Activated CD8-positive, alpha-beta memory T cell treated with anti-CD3 and anti-CD28 coated beads, Interleukin-2, amount 10 ng/mL, durations not matched to agents 7 days and 5 days (primary cell): ENCODE measurements at regions of chr20 and their contacts with region 1.

Region 1: GRCh38 chr20:50179507-50180016 is 11.1 kb upstream of the CEBPB start:
- DNase-seq: no peak
- ATAC-seq: no peak
- H3K4me3 Mint-ChIP-seq: no peak overlapping the region
- H3K27ac Mint-ChIP-seq: no peak overlapping the region
- H3K4me1 Mint-ChIP-seq: no peaks in the 10 kb centered on the region
- H3K27me3 Mint-ChIP-seq: peaks cover 12% of the 10 kb centered on the region

Region 2: DNA sequence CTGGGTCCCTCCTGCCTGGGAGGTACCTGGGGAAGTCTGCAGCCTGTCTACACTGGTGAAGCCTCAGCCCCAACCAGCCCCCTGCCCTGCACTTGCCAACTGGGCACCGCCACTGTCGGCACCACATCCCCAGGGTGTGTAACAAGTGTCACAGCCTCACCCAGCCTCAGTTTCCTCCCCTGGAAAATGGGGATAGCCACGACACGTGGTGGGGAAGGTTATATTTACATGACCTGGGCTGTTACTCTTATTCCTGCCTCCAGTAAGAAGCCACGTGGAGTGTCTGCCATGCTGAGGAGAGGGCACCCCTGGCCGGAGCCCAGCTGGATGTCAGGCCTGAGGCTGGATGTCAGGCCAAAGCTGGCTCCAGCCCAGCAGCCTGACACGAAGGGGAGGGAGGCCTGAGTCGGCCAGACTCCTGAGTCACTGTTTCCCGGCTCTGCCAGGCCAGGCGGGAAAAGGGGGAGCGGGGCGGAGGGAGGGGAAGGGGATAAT is 151.9 kb before region 1 on chr20:
- CTCF ChIA-PET with region 1: no interaction called
- DNase-seq: no peak
- ATAC-seq: no peak
- H3K4me3 Mint-ChIP-seq: no peak overlapping the region
- H3K27ac Mint-ChIP-seq: no peak overlapping the region
- H3K4me1 Mint-ChIP-seq: peaks cover 5% of the 10 kb centered on the region
- H3K27me3 Mint-ChIP-seq: peaks cover 2% of the 10 kb centered on the region

Region 3: DNA sequence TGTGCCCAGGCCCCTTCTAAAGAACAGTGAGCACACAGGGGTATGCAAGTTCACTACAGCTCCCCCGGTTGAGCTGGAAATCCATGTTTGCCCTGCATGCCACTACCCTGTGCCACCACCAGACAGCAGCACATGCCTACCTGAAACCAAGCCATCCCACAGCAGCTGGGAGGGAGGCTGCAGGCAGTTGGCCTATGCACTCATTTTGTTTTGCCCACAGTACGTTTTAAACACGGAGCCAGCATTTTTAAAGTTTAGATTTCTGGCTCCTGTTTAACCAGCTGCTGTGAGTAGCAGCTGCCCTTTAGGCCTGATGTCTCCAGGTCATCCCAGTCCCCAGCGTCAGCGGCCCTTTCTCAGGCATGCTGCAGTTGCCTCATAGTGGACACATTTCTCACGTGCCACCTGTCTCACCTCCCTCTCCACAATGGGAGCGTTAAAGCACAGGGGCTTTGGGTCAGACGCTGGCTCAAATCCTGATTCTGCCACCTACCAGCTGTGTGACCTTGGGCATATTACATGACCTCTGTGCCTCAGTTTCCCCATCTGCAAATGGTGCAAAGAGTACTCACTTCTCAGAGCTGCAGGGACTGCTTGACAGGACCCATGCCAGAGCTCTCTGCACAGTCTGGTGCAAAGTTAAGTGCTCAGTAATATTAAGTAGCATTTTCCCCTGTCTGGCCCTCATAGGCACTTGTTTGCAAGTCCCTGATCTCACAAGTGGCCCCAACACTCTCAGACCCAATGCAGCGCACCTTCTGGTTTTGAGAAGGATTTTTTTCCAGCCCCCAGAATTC is 58.5 kb before region 1 on chr20:
- CTCF ChIA-PET with region 1: interaction called, 48 read pairs
- DNase-seq: peak; percentile 71
- ATAC-seq: peak; percentile 72
- H3K4me3 Mint-ChIP-seq: no peak overlapping the region
- H3K27ac Mint-ChIP-seq: no peak overlapping the region
- H3K4me1 Mint-ChIP-seq: peaks cover 8% of the 10 kb centered on the region
- H3K27me3 Mint-ChIP-seq: no peaks in the 10 kb centered on the region

Region 4: DNA sequence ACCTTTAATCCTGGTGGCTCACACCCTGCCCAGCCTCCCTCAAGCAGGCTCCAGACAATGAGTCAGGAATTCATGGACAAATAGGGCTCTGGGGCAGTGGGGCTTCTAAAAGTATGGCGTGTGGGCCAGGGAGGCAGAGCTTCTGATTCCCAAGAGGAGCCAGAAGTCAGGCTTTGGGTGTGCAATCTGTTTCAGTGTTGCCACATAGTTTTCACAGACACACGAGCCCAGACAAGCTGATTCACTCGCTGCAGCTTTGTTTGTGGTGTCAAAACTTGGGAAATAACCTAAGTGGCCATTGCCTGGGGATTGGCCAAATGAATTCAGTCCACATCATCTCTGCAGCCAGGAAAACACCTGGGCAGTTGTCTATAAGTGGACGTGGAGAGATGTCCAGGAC is 35.2 kb before region 1 on chr20:
- CTCF ChIA-PET with region 1: no interaction called
- DNase-seq: no peak
- ATAC-seq: no peak
- H3K4me3 Mint-ChIP-seq: no peak overlapping the region
- H3K27ac Mint-ChIP-seq: no peak overlapping the region
- H3K4me1 Mint-ChIP-seq: peaks cover 45% of the 10 kb centered on the region
- H3K27me3 Mint-ChIP-seq: no peaks in the 10 kb centered on the region

Region 5: GRCh38 chr20:50460460-50461267 is 281.1 kb after region 1 on chr20:
- CTCF ChIA-PET with region 1: interaction called, 56 read pairs
- DNase-seq: peak; percentile 87
- ATAC-seq: peak; percentile 88
- H3K4me3 Mint-ChIP-seq: no peak overlapping the region
- H3K27ac Mint-ChIP-seq: no peak overlapping the region
- H3K4me1 Mint-ChIP-seq: peaks cover 24% of the 10 kb centered on the region
- H3K27me3 Mint-ChIP-seq: peaks cover 27% of the 10 kb centered on the region